ENCODE measurements at regions of chr13 and their contacts with region 1.

Region 1: GRCh38 chr13:29454911-29455481 is 140.5 kb downstream of the SLC7A1 start:
- DNase-seq: peak; percentile 44
- ATAC-seq: peak; percentile 98
- H3K4me3 Mint-ChIP-seq: no peak overlapping the region
- H3K27ac Mint-ChIP-seq: no peak overlapping the region
- H3K4me1 Mint-ChIP-seq: peaks cover 8% of the 10 kb centered on the region; the same call in 1 of the 2 replicates
- H3K27me3 Mint-ChIP-seq: no peaks in the 10 kb centered on the region
- CTCF ChIP-seq: peak; percentile 49; the same call in 1 of the 2 replicates

Region 2: DNA sequence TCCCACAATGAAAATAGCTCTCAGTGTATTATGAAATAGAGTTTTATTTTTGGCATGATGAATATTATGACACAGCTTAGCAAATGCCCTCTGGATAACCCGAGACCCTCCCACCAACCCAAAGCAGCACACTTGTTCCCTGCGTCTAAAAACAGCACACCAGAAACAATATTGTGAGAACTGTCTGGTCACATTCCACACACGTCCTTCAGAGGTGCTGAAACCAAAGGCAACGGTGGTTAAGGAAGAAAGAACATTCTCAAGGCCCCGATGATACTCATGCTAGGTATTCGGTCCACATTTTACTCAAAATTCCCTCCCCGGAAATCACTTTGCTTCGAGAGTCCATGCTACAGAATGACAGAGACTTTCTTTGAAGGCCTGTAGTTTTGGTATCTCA is 16.2 kb before region 1 on chr13:
- CTCF ChIA-PET with region 1: interaction called, 15 read pairs
- POLR2A ChIA-PET with region 1: no interaction called
- DNase-seq: no peak
- ATAC-seq: no peak
- H3K4me3 Mint-ChIP-seq: no peak overlapping the region
- H3K27ac Mint-ChIP-seq: no peak overlapping the region
- H3K4me1 Mint-ChIP-seq: no peaks in the 10 kb centered on the region
- H3K27me3 Mint-ChIP-seq: no peaks in the 10 kb centered on the region; the same call in 1 of the 2 replicates
- CTCF ChIP-seq: no peak

Region 3: DNA sequence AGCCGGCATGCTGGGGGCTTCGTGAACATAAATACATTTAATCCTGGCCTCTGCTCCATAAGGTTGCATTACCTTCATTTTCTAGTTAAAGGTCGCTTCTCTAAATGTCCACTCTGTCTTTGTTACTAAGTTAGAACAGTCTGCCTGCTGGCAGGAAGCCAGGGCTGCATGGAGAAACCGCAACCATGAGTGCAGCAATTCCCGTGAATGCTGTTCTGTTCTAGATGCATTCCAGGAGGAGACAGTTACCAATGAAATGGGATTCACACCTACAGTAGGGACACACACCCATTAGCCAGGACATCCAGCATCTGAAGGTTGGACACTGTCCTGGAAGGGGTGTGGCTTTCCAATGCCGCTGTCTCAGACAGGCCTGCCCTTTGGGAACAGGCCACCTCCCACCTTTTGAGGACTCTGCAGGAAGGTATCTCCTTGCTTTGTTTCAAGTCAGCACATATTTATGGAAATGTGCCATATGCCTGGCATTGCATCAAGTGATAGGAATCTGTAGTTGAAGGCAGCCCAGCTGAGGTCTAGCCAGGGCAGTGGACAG is 10.8 kb after region 1 on chr13:
- CTCF ChIA-PET with region 1: interaction called, 37 read pairs
- POLR2A ChIA-PET with region 1: no interaction called
- DNase-seq: no peak
- ATAC-seq: peak; percentile 38
- H3K4me3 Mint-ChIP-seq: no peak overlapping the region
- H3K27ac Mint-ChIP-seq: no peak overlapping the region
- H3K4me1 Mint-ChIP-seq: no peaks in the 10 kb centered on the region
- H3K27me3 Mint-ChIP-seq: no peaks in the 10 kb centered on the region; the same call in 1 of the 2 replicates
- CTCF ChIP-seq: no peak

Region 4: GRCh38 chr13:29472332-29472961 is 17.5 kb after region 1 on chr13:
- CTCF ChIA-PET with region 1: interaction called, 37 read pairs
- POLR2A ChIA-PET with region 1: no interaction called
- DNase-seq: peak; percentile 68
- ATAC-seq: peak; percentile 76
- H3K4me3 Mint-ChIP-seq: no peak overlapping the region
- H3K27ac Mint-ChIP-seq: no peak overlapping the region
- H3K4me1 Mint-ChIP-seq: no peaks in the 10 kb centered on the region
- H3K27me3 Mint-ChIP-seq: no peaks in the 10 kb centered on the region; the same call in 1 of the 2 replicates
- CTCF ChIP-seq: peak; percentile 81

Region 5: DNA sequence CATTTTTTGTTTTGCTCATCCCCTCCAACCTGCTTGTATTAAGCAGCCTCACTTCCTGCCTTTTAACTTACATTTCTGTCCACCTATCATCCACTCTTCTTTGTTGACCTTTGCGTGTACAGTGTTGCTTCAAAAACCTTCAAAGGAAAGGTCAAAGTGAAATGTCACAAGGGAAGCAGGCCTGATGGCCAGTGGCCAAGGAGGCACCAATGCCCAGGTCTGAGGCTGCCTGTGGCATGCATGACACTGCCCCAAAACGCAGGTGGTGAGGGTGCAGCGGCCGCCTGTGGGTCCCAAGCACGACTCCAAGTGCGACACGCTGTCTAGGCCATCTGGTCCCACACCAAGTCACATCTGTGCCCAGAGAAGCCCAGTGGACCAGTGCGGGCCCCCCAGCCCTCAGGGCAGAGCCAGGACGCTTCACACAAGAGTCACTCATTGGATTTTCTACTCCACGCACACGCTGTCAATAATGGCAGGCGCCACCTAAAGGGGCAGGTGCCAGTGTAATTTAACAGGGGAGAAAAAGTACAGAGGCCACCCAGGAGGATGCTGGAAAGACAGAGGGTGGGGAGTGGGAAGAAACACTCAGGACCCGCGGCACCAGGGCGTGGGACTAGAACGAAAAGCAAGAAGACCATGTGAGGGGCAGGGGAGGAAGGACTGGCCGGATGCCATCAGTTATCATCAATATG is 117.0 kb after region 1 on chr13:
- CTCF ChIA-PET with region 1: no interaction called
- POLR2A ChIA-PET with region 1: no interaction called
- DNase-seq: no peak
- ATAC-seq: no peak
- H3K4me3 Mint-ChIP-seq: no peak overlapping the region
- H3K27ac Mint-ChIP-seq: peak overlapping the region; percentile 47; the same call in 1 of the 2 replicates
- H3K4me1 Mint-ChIP-seq: peaks cover 59% of the 10 kb centered on the region
- H3K27me3 Mint-ChIP-seq: no peaks in the 10 kb centered on the region
- CTCF ChIP-seq: no peak

Measured in WTC11 (cell line).